GM13977 (cell line): ENCODE measurements at regions of chr7 and their contacts with region 1.

Region 1: DNA sequence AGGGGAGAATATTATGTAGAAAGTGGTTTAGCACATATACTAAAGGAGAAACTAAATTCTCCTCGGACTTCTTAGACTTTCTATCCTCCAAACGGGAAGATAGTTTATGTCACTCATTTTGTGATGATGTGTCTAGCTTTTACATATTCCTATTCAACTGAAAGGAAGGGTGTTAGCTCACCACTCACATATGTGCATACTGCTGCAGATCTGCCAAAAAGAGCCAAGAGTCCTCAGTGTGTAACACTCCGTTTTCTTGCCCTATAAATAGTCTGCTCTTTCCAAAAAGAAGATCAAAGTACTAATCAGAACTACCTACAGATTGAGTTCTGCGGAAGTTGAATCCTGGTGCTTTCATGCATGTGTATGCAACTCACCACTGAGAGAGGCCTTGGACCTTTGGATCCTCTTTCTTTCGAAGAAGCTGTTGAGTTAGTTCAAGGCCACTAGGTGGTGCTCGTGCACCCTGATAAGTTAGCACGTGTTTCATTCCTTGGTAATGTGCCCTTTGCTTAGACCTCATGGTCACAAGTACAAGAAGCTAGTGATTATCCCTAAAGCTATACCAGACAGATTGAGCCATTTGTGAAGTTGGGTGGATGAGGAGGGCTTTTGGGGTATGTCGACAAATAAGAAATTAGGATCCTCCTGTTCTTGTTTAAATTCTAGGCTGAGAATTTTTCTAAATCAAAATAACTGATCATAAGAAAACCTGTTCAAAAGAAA is 14.1 kb downstream of the YAE1 start:
- DNase-seq: peak; percentile 88
- CTCF ChIP-seq: peak; percentile 82

Region 2: DNA sequence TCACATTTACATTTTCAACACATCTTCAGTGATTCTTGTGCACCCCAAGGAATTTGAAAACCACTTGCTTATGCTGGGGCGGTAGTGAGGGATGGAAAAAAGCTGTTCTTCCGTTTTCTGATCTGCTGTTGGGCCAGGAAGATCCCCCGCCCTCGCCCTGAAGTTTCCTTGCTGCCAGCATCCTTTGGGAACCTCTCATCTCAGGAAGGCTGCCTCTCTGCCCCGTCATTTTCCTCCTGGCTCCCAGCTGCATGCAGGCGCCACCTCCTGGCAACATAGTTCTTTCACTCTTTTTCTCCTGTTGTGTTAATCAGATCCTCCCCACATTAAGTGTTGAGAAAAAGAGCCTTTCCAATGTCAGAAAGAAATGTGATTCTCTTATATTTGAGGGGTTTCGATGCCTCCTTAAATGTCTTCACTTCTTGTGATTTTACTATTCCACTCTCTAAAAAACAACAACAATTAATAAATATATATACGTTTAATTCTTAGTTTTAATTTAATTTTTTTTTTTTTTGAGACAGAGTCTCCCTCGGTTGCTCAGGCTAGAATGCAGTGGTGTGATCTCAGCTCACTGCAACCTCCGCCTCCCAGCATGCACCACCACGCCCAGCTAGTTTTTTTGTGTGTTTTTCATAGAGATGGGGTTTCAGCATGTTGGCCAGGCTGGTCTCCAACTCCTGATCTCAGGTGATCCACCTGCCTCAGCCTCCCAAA is 165.9 kb after region 1 on chr7:
- in situ Hi-C with region 1: loop called (anchors 5 kb)
- DNase-seq: peak; percentile 73
- CTCF ChIP-seq: peak; percentile 86